PC-9 (cell line): ENCODE measurements at regions of chr18 and their contacts with region 1.

Region 1: DNA sequence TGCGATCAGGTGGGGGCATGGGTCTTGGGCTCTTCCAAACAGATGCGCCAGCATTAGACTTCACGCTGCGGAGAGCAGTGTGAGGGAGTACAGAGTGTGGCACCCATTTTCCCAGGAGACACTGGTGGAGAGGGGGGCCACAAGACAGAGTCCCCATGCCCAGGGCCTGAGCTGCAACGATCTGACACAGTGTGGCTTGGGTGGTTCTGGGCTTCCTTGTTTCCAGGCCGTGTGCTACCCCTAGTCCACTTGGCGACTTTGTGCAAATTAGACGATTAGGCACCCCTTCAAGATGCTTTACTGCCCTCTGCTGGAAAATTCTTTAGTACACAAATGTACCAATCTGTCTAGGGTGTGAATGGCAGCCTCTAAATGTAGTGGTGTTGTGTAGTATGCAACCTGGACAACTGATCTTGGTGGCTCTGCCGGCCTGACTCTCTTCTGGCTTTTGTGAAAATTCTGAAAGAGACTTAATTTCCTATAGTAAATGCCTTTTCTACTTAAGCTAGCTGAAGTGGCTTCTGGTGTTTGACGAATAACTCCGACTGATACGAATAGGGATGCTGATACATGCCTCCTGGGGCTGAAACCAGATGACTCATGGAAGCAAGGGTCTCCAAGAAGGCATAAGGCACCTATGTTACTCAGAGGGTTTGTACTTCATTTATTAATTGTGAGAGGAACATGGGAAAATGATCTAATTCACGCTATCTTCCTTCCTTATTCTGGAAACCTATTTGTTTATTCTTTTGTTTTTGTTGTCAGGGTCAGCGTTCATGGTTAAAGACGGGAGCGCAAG is 92.3 kb upstream of the SMAD2 start:
- DNase-seq: peak in 1 of 2 experiments; percentile 71
- H3K4me3 ChIP-seq: no peak overlapping the region
- H3K27ac ChIP-seq: no peak overlapping the region
- H3K4me1 ChIP-seq: peaks cover 21% of the 10 kb centered on the region
- H3K27me3 ChIP-seq: peaks cover 10% of the 10 kb centered on the region; the same call in 1 of the 2 replicates
- CTCF ChIP-seq: peak; percentile 76

Region 2: DNA sequence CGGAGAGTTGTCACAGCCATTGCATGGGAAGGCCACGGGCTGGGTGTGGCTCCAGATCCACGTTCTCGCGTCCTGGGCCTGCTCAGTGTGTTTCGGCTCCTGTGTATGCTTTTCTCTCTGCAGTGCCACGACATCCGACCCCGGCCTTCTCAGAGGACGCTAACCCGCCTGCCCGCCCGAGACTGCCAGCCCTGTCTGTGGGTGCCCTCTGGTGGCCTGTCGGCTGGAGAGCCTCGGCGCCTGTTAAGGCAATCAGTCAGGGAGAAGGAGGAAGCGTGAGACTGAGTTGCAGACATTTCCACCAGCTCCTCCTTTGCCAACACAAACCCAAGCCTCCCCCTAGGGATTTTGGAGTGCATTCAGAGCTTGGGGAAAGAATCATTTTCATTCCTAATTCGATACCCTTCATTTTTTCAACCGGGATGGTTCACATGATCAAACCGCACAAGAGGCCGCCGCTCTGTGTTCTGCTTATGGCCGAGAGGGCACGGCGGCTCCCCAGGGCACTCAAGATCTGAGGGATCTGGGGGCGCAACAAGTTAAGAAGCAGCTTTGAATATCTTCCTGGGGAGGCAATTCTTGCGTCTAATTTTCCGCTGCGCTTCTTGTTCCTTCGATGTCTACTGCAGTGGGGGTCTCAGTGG is 424.0 kb after region 1 on chr18:
- CTCF ChIA-PET with region 1: no interaction called
- POLR2A ChIA-PET with region 1: no interaction called
- intact Hi-C with region 1: loop called (anchors 1 kb)
- DNase-seq: peak; percentile 69 to 70
- H3K4me3 ChIP-seq: no peak overlapping the region
- H3K27ac ChIP-seq: no peak overlapping the region
- H3K4me1 ChIP-seq: peaks cover 17% of the 10 kb centered on the region
- H3K27me3 ChIP-seq: no peaks in the 10 kb centered on the region
- CTCF ChIP-seq: peak; percentile 91

Region 3: GRCh38 chr18:48468151-48468550 is 445.4 kb after region 1 on chr18:
- CTCF ChIA-PET with region 1: no interaction called
- POLR2A ChIA-PET with region 1: no interaction called
- intact Hi-C with region 1: loop called (anchors 5 kb)
- DNase-seq: peak in 1 of 2 experiments; percentile 4
- H3K4me3 ChIP-seq: no peak overlapping the region
- H3K27ac ChIP-seq: no peak overlapping the region
- H3K4me1 ChIP-seq: no peaks in the 10 kb centered on the region
- H3K27me3 ChIP-seq: no peaks in the 10 kb centered on the region
- CTCF ChIP-seq: no peak